ENCODE measurements at regions of chr4 and their contacts with region 1.

Region 1: DNA sequence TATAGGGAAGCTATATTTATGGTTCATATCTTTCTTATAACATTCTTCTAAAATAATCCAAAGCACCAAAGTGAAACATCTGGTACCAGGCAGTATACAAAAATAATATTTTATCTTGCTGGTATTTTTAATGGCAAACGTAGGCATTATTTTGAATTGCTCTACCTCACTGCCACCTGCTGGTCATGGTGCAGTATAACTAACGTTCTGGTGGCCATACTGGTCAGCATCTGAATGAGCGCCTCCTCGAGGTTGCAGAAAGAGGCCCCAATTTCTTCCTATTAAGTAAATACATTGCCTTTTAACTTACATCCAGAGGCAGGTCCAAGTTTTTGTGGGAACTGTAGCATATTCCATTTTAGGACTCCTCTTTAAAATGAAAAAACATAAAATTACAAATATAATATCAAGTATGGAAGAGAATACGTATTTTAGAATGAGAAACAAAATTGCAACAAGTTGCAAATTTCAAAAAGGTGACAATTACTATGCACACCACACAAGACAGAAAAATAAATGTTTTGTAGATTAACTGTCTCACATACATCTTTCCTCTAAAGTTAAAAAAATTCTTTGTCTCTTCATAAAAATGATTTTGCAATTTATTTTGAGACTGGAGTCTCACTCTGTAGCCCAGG is 22.9 kb upstream of the CWH43 start:
- DNase-seq: peak; percentile 87
- H3K4me3 ChIP-seq: no peak overlapping the region
- CTCF ChIP-seq: peak; percentile 100

Region 2: GRCh38 chr4:48557478-48557877 is 405.7 kb before region 1 on chr4:
- in situ Hi-C with region 1: loop called (anchors 25 kb)
- DNase-seq: no peak
- H3K4me3 ChIP-seq: no peak overlapping the region
- CTCF ChIP-seq: peak; percentile 35

Region 3: DNA sequence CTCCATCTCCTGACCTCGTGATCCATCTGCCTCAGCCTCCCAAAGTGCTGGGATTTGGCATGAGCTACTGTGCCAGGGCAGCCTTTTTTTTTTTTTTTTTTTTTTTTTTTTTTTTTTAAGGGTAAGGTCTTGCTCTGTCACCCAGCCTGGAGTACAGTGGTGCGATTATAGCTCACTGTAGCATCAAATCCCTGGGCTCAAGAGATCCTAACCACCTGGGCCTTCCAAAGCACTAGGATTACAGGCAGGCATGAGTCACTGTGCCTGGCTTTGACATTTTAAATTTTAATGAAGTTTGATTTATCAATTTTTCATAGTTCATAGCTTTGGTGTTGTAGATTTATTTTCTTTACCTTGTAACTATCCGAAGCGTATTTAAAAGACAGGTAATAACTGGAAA is 38.7 kb before region 1 on chr4:
- in situ Hi-C with region 1: no loop called
- DNase-seq: no peak
- H3K4me3 ChIP-seq: no peak overlapping the region
- CTCF ChIP-seq: no peak

Measured in astrocyte of the cerebellum (primary cell).